ENCODE measurements at regions of chr7 and their contacts with region 1.

Region 1: DNA sequence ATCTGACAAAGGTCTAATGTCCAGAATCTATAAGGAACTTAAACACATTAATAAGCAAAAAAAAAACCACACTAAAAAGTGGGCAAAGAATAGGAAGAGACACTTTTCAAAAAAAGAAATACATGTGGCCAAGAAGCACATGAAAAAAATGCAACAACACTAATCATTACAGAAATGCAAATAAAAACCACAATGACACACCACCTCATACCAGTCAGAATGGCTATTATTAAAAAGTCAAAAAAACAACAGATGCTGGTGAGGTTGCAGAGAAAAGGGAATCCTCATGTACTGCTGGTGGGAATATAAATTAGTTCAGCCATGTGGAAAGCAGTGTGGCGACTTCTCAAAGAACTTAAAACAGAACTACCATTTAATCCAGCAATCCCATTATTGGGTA is 119.0 kb downstream of the LMBR1 start:
- DNase-seq: no peak
- H3K4me3 Mint-ChIP-seq: no peak overlapping the region
- H3K27ac Mint-ChIP-seq: no peak overlapping the region
- H3K4me1 Mint-ChIP-seq: peaks cover 28% of the 10 kb centered on the region
- H3K27me3 Mint-ChIP-seq: no peaks in the 10 kb centered on the region

Region 2: DNA sequence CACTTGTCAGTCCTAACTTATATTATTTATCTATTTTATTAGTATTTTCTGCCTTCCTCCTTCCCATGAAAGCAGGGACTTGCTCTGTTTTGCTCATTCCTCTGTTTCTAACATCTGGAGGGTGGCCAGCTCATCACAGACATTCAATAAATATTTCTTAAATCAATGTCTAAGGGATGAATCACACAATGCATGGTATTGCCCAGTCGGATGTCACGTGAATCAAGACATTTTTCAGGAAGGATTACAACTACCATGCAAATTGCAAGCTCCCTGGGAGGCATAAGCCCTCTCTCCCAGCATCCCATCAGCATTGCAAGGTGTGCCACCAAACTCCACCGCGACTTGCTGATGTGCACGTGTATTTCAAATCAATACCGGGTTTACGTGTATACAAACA is 280.0 kb before region 1 on chr7:
- CTCF ChIA-PET with region 1: no interaction called
- intact Hi-C with region 1: no loop called
- DNase-seq: no peak
- H3K4me3 Mint-ChIP-seq: no peak overlapping the region
- H3K27ac Mint-ChIP-seq: no peak overlapping the region
- H3K4me1 Mint-ChIP-seq: no peaks in the 10 kb centered on the region
- H3K27me3 Mint-ChIP-seq: no peaks in the 10 kb centered on the region

Region 3: DNA sequence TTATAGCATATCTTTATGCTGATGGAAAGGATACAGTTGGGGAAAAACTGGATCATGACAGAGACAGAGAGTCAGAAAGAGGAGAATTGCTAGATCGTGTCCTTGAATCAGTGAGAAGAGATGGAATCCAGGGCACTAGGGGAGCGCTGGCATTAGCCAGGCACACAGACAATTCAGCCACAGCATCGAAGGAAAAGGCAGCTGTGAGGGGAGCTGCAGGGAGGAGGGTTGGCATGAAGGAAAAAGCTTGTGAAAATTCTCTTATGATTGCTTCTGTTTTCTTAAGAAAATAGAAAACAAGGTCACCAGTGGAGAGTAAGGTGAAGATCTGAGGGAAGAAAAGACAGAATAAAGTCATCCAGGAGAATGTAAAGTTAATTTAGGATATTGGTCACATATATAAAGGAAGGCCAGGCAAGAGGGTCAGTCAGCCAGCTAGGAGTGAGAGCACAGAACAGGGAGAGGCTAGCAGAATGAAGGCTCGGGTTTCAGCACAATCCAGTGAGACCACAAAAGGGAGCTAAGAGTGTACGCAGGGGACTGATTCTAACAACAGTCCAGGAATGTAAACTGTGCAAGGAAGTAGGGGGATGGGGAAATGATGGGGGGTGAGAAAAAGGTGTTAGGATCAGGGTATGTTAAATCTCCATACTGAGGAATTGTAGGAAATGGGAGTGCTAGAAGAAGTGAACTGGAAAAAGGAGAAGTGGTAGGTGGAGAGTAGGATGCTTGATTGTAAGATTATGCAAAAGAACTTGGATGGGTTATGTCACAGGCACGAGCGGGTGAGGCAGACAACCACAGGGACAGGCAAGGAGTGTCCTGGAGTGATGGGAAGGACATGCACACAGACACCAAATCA is 21.4 kb before region 1 on chr7:
- CTCF ChIA-PET with region 1: interaction called, 3 read pairs
- intact Hi-C with region 1: loop called (anchors 2 kb)
- DNase-seq: no peak
- H3K4me3 Mint-ChIP-seq: no peak overlapping the region
- H3K27ac Mint-ChIP-seq: no peak overlapping the region
- H3K4me1 Mint-ChIP-seq: no peaks in the 10 kb centered on the region
- H3K27me3 Mint-ChIP-seq: no peaks in the 10 kb centered on the region

Region 4: GRCh38 chr7:156802214-156802613 is 28.2 kb after region 1 on chr7:
- CTCF ChIA-PET with region 1: no interaction called
- intact Hi-C with region 1: loop called (anchors 2 kb)
- DNase-seq: no peak
- H3K4me3 Mint-ChIP-seq: no peak overlapping the region
- H3K27ac Mint-ChIP-seq: no peak overlapping the region
- H3K4me1 Mint-ChIP-seq: no peaks in the 10 kb centered on the region
- H3K27me3 Mint-ChIP-seq: no peaks in the 10 kb centered on the region

Measured in activated naive CD4-positive, alpha-beta T cell treated with anti-CD3 and anti-CD28 coated beads for 36 hours (primary cell).